HEK293T (cell line): ENCODE measurements at regions of chr1 and their contacts with region 1.

Region 1: GRCh38 chr1:91021686-91022517 is at the start of gene ZNF644:
- DNase-seq: peak; percentile 86

Region 2: DNA sequence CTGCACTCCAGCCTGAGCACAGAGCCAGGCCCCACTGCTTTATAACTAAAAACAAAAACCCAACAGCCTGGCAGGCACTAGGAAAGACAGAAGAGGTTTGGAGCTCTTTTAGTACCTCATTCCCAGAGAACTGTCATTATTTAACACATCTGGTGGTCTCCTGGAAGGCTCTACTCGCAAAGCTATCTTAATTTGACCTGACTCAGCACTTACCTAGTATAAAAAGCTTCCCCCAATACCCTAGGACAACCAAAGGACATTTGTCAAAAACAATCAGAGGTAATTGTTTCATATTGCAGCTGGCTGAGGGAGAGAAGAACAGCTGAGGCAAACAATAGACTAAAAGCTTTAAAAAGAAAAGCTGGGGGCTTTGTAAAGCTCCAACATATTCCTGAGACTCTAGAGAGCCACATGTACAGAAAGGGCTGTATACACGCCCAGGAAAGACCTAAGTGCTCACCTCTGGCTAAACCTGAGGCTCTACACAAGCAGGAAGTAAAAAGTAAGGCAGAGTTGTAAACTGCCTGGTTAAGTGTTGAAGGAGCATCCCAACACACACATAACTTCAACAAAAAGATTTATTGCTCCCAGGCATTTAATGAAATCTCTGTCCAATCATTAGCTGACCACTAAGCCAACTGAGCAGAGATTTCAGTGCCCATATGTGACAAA is 25.0 kb before region 1 on chr1:
- CTCF ChIA-PET with region 1: no interaction called
- POLR2A ChIA-PET with region 1: interaction called, 10 read pairs
- DNase-seq: no peak

Region 3: GRCh38 chr1:91054780-91055481 is 33.0 kb after region 1 on chr1:
- CTCF ChIA-PET with region 1: no interaction called
- POLR2A ChIA-PET with region 1: interaction called, 10 read pairs
- DNase-seq: no peak